ENCODE measurements at regions of chr5 and their contacts with region 1.

Region 1: DNA sequence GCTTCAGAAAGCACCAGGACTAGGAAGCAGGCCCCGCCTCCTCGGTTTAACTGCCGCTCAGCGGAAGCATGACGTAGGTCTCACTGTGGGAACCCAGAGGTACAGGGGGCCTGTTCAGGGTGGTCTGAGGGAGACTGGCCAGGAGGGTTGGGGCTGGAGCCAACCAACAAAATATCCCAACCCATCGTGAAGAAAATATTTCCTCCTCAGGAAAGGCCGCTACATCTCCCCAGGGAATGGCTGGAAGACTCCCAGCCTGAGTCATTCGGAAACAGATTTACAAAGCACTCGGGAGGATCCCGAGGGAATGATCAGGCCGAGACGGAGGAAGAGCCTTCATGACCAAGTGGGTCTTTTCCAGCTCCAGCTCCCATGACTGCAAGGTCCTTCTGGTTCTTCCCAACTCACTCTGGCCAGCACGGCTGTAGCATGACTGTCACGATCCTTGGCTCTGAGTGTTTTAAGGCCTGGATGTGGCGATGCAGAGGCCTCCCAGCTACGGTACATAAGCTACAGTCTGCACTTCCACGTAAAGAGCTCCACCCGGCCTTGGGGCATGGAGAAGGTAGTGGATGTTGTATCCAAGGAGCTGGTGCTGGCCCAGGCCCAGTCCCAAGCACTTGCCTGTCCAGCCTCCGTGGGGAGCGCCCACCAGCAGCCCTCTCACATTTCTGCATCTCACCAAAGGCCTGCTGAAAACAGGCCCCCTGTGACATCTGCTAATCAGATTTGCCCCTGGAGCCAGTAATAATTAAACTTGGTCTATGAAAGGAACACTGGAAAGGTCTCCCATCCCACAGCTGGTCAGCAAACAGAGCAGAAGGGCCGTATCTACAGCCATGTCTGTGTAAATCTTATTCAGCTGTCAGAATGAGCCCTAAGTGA is 100.6 kb downstream of the LHFPL2 start:
- DNase-seq: peak; percentile 84 to 97
- H3K4me3 ChIP-seq: peak overlapping the region in 1 of 2 donors; percentile 22
- H3K27ac ChIP-seq: peak overlapping the region; percentile 94
- H3K4me1 ChIP-seq: peaks cover 12 to 34% of the 10 kb centered on the region in 2 donors
- H3K27me3 ChIP-seq: no peaks in the 10 kb centered on the region
- CTCF ChIP-seq: no peak

Region 2: DNA sequence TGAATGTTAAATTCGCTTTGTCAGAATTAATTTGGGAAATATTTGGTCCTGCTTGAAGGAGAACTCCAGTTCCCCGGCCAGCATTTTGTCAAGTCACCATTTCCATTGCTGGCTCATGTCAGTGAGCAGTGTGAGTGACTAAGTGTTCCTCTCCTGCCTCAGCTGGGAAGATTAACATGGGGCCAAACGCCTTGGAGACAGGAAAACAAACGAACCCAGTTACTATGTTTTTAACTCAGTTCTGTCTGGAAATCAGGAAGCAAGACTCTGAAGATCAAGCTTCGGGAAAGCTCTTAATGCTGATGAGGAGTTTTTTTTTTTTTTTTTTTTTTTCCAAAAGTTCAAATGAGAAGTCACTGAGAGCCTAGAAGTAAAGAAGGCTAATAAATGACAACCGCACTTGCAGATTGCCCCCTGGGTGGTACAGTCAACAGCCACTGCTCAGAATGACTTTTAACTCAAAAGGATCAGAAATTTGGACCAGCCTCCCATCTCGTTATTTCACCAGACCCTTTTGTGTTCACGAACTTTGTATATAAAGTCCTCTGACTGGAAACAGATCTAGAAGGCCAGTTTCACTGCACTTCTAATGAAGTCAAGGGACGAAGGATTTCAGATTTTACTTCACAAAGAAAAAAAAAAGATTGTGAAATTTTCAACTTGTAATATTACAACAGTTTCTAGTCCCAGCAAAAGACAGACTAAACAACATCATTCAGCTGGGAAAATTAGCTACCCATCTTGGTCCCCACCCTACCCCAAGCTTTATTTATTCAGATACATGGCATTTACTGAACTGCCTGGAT is 20.7 kb before region 1 on chr5:
- intact Hi-C with region 1: loop called (anchors 2 kb)
- DNase-seq: peak; percentile 79 to 96
- H3K4me3 ChIP-seq: peak overlapping the region; percentile 3 to 33
- H3K27ac ChIP-seq: peak overlapping the region; percentile 74 to 89
- H3K4me1 ChIP-seq: peaks cover 26 to 66% of the 10 kb centered on the region in 2 donors
- H3K27me3 ChIP-seq: no peaks in the 10 kb centered on the region
- CTCF ChIP-seq: no peak

Region 3: DNA sequence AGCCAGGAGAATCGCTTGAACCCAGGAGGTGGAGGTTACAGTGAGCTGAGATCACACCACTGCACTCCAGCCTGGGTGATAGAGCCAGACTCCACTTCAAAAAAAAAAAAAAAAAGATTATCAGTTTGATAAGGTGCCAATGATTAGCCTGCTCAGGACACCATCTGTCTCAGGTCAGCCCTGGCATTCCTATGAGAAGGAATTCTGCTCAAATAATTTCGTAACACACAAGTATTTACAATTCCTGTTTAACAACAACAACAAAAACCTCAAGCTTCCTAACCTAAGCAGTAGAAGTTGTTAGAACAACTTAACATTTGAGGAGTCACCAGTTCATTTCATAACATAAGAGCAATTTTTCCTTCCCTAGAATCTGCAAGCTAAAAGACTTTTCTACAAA is 15.6 kb after region 1 on chr5:
- intact Hi-C with region 1: loop called (anchors 2 kb)
- DNase-seq: no peak
- H3K4me3 ChIP-seq: no peak overlapping the region
- H3K27ac ChIP-seq: no peak overlapping the region
- H3K4me1 ChIP-seq: peaks cover 4 to 21% of the 10 kb centered on the region in 2 donors
- H3K27me3 ChIP-seq: no peaks in the 10 kb centered on the region
- CTCF ChIP-seq: no peak

Region 4: DNA sequence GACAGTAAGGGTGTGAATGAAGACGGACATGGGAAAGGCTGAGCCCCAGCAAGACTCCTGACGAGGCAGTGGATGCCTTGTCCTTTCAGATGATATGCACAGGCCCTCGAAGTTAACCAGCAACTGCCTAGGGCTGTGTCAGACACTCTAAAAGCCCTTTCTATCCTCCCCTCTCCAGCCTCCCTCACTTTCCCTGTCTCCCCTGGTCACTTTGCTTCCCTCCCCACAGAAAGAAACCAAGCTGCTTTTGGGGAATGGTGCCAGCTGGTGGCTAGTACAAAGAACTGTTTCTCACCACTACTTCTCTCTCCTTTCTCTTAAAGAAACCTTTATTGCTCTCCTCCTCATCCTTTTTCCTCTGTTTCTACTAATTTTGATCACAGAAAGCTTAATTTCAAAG is 79.2 kb after region 1 on chr5:
- intact Hi-C with region 1: loop called (anchors 5 kb)
- DNase-seq: no peak
- H3K4me3 ChIP-seq: no peak overlapping the region
- H3K27ac ChIP-seq: no peak overlapping the region
- H3K4me1 ChIP-seq: peaks cover 7 to 10% of the 10 kb centered on the region in 2 donors
- H3K27me3 ChIP-seq: no peaks in the 10 kb centered on the region
- CTCF ChIP-seq: peak in 2 of 3 experiments; percentile 40 to 44

Region 5: DNA sequence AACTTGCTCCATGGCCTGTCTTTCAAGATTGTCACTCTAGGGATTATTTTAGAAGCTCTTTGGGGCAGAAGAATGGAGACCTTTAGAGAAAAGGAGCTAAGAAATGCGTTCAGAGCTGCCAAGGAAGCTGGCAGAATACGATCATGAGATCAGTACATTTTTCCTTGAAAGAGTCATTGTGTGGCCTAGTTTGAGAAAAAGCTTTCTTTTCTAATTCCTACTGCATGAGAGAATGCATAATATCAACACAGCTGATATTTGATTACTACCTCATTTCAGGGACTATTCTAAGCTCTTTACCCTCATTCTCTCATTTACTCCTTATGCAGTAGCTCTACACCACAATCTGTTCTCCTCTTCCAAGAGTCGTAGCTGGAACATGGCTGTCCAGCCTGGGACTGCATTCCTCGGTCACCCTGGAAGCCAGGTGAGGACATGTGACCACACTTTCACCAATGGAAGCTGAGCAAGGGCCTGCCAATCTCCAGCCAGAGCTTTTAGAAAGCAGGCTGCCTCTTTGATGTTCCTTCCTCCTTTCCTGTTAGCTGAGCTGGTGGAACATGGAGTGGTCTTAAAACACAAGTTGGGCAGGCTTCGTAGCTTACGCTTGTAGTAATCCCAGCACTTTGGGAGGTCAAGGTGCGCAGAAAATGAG is 199.9 kb after region 1 on chr5:
- intact Hi-C with region 1: loop called (anchors 5 kb)
- DNase-seq: peak in 1 of 2 donors; percentile 68
- H3K4me3 ChIP-seq: no peak overlapping the region
- H3K27ac ChIP-seq: peak overlapping the region; percentile 79 to 92
- H3K4me1 ChIP-seq: peaks cover 10 to 24% of the 10 kb centered on the region in 2 donors
- H3K27me3 ChIP-seq: no peaks in the 10 kb centered on the region
- CTCF ChIP-seq: no peak

Region 6: DNA sequence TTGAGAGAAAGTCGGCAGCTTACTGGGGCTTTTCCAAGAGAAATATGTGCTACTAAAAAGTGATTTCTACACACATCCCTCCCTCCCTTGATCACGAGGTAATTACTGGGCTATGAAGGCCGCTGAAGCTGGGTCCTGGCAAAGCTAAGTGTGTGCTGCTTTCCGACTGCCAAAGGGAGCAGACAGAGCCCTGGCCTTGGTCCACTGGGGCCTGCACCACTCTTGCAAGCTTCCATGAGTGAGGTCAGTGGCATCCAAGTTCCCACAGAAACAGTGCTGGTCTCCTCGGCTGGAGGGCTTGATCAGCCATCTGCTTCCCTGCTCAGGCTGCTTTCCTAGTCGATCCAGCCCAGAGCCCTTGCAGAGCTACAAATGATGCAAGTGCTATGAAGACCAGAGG is 255.4 kb after region 1 on chr5:
- intact Hi-C with region 1: no loop called
- DNase-seq: peak; percentile 10 to 86
- H3K4me3 ChIP-seq: no peak overlapping the region
- H3K27ac ChIP-seq: peak overlapping the region; percentile 12 to 24
- H3K4me1 ChIP-seq: peaks cover 0 to 8% of the 10 kb centered on the region in 2 donors
- H3K27me3 ChIP-seq: no peaks in the 10 kb centered on the region
- CTCF ChIP-seq: no peak

Region 7: DNA sequence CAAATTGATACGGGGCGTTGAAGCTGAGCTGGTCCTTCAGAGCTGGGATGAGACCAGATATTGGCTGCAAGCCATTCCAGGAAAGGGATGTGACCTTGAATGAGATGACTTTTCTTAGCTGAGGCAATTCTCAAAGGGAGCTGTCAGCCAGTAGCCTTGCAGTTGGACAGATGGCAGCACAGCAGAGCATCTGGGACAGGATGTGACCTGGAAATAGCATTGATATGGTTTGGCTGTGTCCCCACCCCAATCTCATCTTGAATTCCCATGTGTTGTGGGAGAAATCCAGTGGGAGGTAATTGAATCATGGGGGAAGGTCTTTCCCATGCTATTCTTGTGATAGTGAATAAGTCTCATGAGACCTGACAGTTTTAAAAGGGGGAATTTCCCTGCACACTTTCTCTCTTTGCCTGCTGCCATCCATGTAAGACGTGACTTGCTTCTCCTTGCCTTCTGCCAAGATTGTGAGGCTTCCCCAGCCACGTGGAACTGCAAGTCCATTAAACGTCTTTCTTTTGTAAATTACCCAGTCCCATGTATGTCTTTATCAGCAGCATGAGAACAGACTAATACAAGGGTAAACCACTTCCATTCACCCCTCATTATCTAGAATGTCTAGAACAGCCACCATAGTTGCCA is 1462.9 kb after region 1 on chr5:
- intact Hi-C with region 1: no loop called
- DNase-seq: no peak
- H3K4me3 ChIP-seq: no peak overlapping the region
- H3K27ac ChIP-seq: no peak overlapping the region
- H3K4me1 ChIP-seq: no peaks in the 10 kb centered on the region
- H3K27me3 ChIP-seq: no peaks in the 10 kb centered on the region
- CTCF ChIP-seq: no peak

Measured in ascending aorta (tissue), 2 donors.